Panc1 (cell line): ENCODE measurements at regions of chr7 and their contacts with region 1.

Region 1: GRCh38 chr7:50679218-50680007 is 103.3 kb downstream of the GRB10 start:
- DNase-seq: peak; percentile 12
- ATAC-seq: peak; percentile 84; the same call in 1 of the 2 replicates
- H3K4me3 ChIP-seq: no peak overlapping the region
- H3K27ac ChIP-seq: no peak overlapping the region
- H3K4me1 ChIP-seq: no peaks in the 10 kb centered on the region
- H3K27me3 ChIP-seq: no peaks in the 10 kb centered on the region
- CTCF ChIP-seq: no peak; the same call in 1 of the 2 replicates

Region 2: GRCh38 chr7:50092579-50093491 is 586.6 kb before region 1 on chr7 and contains the start of gene ZPBP:
- CTCF ChIA-PET with region 1: interaction called, 4 read pairs
- POLR2A ChIA-PET with region 1: no interaction called
- in situ Hi-C with region 1: no loop called
- intact Hi-C with region 1: loop called (anchors 10 kb)
- DNase-seq: peak; percentile 41
- ATAC-seq: no peak; the same call in 1 of the 2 replicates
- H3K4me3 ChIP-seq: no peak within 1 kb of the TSS
- H3K27ac ChIP-seq: no peak within 1 kb of the TSS
- H3K4me1 ChIP-seq: no peaks in the 10 kb centered on the region
- H3K27me3 ChIP-seq: peaks cover 13% of the 10 kb centered on the region
- CTCF ChIP-seq: peak; percentile 84
- total RNA-seq, gene ZPBP: not detected